Activated CD4-positive, alpha-beta T cell treated with anti-CD3 and anti-CD28 coated beads for 36 hours (primary cell): ENCODE measurements at regions of chr17 and their contacts with region 1.

Region 1: DNA sequence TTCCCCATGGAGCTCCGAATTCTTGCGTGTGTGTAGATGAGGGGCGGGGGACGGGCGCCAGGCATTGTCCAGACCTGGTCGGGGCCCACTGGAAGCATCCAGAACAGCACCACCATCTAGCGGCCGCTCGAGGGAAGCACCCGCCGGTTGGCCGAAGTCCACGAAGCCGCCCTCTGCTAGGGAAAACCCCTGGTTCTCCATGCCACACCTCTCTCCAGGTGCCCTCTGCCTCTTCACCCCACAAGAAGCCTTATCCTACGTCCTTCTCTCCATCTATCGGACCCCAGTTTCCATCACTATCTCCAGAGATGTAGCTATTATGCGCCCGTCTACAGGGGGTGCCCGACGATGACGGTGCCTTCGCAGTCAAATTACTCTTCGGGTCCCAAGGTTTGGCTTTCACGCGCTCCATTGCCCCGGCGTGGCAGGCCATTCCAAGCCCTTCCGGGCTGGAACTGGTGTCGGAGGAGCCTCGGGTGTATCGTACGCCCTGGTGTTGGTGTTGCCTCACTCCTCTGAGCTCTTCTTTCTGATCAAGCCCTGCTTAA is 617 bp upstream of the SENP3 start:
- DNase-seq: peak; percentile 92
- ATAC-seq: peak; percentile 75
- H3K4me3 Mint-ChIP-seq: peak overlapping the region; percentile 79
- H3K27ac Mint-ChIP-seq: peak overlapping the region; percentile 87
- H3K4me1 Mint-ChIP-seq: peaks cover 46% of the 10 kb centered on the region
- H3K27me3 Mint-ChIP-seq: no peaks in the 10 kb centered on the region

Region 2: GRCh38 chr17:7306911-7307686 is 254.0 kb before region 1 on chr17 and contains the start of gene EIF5A:
- CTCF ChIA-PET with region 1: no interaction called
- POLR2A ChIA-PET with region 1: no interaction called
- intact Hi-C with region 1: loop called in 1 of 2 experiments (anchors 1 kb)
- DNase-seq: peak; percentile 100
- ATAC-seq: peak; percentile 86
- H3K4me3 Mint-ChIP-seq: peak within 1 kb of the TSS; percentile 96
- H3K27ac Mint-ChIP-seq: peak within 1 kb of the TSS; percentile 100
- H3K4me1 Mint-ChIP-seq: peaks cover 36% of the 10 kb centered on the region
- H3K27me3 Mint-ChIP-seq: no peaks in the 10 kb centered on the region
- total RNA-seq, gene EIF5A: 780 to 934 TPM

Region 3: GRCh38 chr17:7351665-7352501 is 209.2 kb before region 1 on chr17 and contains the start of gene KCTD11:
- CTCF ChIA-PET with region 1: interaction called, 9 read pairs
- POLR2A ChIA-PET with region 1: interaction called, 3 read pairs
- intact Hi-C with region 1: loop called (anchors 1 to 2 kb)
- DNase-seq: peak; percentile 90
- ATAC-seq: peak; percentile 58
- H3K4me3 Mint-ChIP-seq: peak within 1 kb of the TSS; percentile 79
- H3K27ac Mint-ChIP-seq: peak within 1 kb of the TSS; percentile 84
- H3K4me1 Mint-ChIP-seq: peaks cover 55% of the 10 kb centered on the region
- H3K27me3 Mint-ChIP-seq: no peaks in the 10 kb centered on the region
- total RNA-seq, gene KCTD11: 5.0 to 6.1 TPM

Region 4: GRCh38 chr17:7444682-7445618 is 116.2 kb before region 1 on chr17 and contains the start of gene CHRNB1:
- CTCF ChIA-PET with region 1: interaction called, 10 read pairs
- POLR2A ChIA-PET with region 1: no interaction called
- intact Hi-C with region 1: no loop called
- DNase-seq: peak; percentile 31
- ATAC-seq: peak; percentile 6
- H3K4me3 Mint-ChIP-seq: peak within 1 kb of the TSS; percentile 47
- H3K27ac Mint-ChIP-seq: no peak within 1 kb of the TSS
- H3K4me1 Mint-ChIP-seq: peaks cover 26% of the 10 kb centered on the region
- H3K27me3 Mint-ChIP-seq: peaks cover 43% of the 10 kb centered on the region
- total RNA-seq, gene CHRNB1: 7.8 to 8.7 TPM

Region 5: DNA sequence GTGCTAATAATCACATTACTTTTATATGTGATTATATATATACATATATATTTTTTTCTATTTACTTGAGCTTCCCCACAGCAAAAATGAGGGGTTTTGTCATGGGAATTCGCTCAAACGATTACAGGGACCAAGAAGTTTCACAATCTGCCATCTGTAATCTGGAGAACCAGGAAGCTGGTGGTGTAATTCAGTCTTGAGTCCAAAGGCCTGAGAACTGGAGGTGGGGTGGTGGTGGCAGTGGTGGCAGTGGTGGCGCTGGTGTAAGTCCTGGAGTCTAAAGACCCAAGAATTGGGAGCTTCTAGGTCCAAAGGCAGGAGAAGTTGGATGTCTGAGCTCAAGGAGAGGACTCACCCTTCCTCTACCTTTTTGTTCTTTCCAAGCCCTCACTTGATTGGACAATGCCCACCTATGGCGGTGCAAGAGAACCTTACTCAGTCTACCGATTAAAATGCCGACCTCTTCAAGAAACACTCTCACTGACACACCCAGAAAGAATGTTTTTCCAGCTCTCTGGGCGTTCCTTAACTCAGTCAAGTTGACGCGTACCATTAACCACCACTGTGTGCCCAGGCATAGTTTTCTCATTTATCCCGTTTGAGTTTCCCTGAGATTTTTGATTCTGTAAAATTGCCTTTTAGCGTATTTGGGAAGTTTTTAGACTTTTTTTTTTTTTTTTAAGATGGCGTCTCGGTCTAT is 45.0 kb before region 1 on chr17:
- CTCF ChIA-PET with region 1: interaction called, 70 read pairs
- POLR2A ChIA-PET with region 1: no interaction called
- intact Hi-C with region 1: loop called (anchors 1 kb)
- DNase-seq: no peak
- ATAC-seq: no peak
- H3K4me3 Mint-ChIP-seq: no peak overlapping the region
- H3K27ac Mint-ChIP-seq: no peak overlapping the region
- H3K4me1 Mint-ChIP-seq: no peaks in the 10 kb centered on the region
- H3K27me3 Mint-ChIP-seq: no peaks in the 10 kb centered on the region

Region 6: DNA sequence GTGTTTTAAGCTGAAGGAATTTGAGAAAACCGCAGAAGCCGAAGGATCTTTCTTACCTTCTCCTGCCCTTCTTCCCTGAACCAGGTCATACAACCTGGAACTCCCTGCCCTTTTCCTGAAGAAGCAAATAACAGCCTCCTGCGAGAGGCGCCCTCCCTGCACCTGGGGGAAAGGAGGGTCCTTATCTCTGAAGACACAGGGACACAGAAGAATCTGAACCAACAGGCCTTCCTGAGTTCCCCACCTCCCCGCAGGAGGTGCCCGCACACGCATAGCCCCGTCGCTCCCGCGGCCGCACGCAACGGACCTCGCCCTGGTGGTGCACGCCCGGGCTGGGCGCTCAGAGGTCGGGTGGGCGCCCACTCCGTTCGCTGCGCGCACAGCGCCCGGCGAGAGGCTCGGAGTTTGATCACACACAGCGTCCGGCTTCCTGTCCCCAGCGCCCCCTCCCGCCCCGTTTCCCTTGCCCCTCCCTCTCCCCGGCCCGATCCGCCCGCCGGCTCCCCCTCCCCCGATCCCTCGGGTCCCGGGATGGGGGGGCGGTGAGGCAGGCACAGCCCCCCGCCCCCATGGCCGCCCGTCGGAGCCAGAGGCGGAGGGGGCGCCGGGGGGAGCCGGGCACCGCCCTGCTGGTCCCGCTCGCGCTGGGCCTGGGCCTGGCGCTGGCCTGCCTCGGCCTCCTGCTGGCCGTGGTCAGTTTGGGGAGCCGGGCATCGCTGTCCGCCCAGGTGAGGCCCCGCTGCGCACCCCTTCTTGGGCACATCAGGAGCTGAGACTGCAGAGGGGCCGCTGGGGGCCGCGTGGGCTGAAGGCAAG is 12.3 kb before region 1 on chr17 and contains the start of gene TNFSF12:
- CTCF ChIA-PET with region 1: interaction called, 11 read pairs
- POLR2A ChIA-PET with region 1: interaction called, 4 read pairs
- intact Hi-C with region 1: loop called in 1 of 2 experiments (anchors 1 kb)
- DNase-seq: peak; percentile 77
- ATAC-seq: peak; percentile 45
- H3K4me3 Mint-ChIP-seq: peak within 1 kb of the TSS; percentile 70
- H3K27ac Mint-ChIP-seq: peak within 1 kb of the TSS; percentile 49
- H3K4me1 Mint-ChIP-seq: peaks cover 48% of the 10 kb centered on the region
- H3K27me3 Mint-ChIP-seq: no peaks in the 10 kb centered on the region
- total RNA-seq, gene TNFSF12: 10.9 to 13.7 TPM

Region 7: GRCh38 chr17:7614422-7615264 is 53.5 kb after region 1 on chr17 and contains the start of gene FXR2:
- CTCF ChIA-PET with region 1: interaction called, 6 read pairs
- POLR2A ChIA-PET with region 1: no interaction called
- intact Hi-C with region 1: loop called in 1 of 2 experiments (anchors 1 kb)
- DNase-seq: peak; percentile 100
- ATAC-seq: peak; percentile 95
- H3K4me3 Mint-ChIP-seq: peak within 1 kb of the TSS; percentile 85
- H3K27ac Mint-ChIP-seq: peak within 1 kb of the TSS; percentile 93
- H3K4me1 Mint-ChIP-seq: peaks cover 32% of the 10 kb centered on the region
- H3K27me3 Mint-ChIP-seq: no peaks in the 10 kb centered on the region
- total RNA-seq, gene FXR2: 35.6 to 50.2 TPM